Naive thymus-derived CD8-positive, alpha-beta T cell (primary cell): ENCODE measurements at regions of chr12 and their contacts with region 1.

Region 1: GRCh38 chr12:12611512-12612306 is at the start of gene CREBL2:
- DNase-seq: peak; percentile 74 to 93 (median 88)
- ATAC-seq: peak; percentile 89
- H3K4me3 Mint-ChIP-seq: peak within 1 kb of the TSS; percentile 87 to 99 (median 92)
- H3K27ac Mint-ChIP-seq: peak within 1 kb of the TSS; percentile 89 to 100 (median 99)
- H3K4me1 Mint-ChIP-seq: peaks cover 19 to 66% (median 54%) of the 10 kb centered on the region in 4 donors
- H3K27me3 Mint-ChIP-seq: no peaks in the 10 kb centered on the region
- polyA plus RNA-seq, gene CREBL2: 36.5 to 46.8 (median 44.7) TPM

Region 2: DNA sequence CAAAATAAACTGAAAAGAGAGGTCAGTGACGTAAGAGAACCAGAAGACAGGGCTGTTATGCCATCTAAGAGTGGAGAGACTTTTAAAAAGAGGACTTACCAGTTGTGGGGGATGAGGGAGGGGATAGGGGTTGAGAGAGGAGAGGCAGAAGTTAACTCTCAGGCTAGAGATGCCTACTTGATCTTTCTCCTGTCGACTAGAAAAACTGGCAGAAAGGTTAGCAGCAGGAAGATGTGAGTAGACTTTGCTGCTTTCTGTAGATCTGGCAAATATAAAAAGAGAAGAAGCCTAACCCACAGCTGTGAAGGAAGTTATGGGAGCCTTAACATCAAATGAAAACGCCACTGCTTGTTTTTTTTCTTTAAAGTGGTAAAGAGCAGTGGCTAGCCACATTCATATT is 10.7 kb after region 1 on chr12:
- POLR2A ChIA-PET with region 1: interaction called, 25 read pairs
- DNase-seq: peak in 7 of 10 donors; percentile 18 to 80 (median 52)
- ATAC-seq: peak; percentile 89 to 92
- H3K4me3 Mint-ChIP-seq: peak overlapping the region; percentile 48 to 74 (median 62)
- H3K27ac Mint-ChIP-seq: peak overlapping the region; percentile 83 to 94 (median 88)
- H3K4me1 Mint-ChIP-seq: peaks cover 47 to 89% (median 80%) of the 10 kb centered on the region in 4 donors
- H3K27me3 Mint-ChIP-seq: no peaks in the 10 kb centered on the region

Region 3: DNA sequence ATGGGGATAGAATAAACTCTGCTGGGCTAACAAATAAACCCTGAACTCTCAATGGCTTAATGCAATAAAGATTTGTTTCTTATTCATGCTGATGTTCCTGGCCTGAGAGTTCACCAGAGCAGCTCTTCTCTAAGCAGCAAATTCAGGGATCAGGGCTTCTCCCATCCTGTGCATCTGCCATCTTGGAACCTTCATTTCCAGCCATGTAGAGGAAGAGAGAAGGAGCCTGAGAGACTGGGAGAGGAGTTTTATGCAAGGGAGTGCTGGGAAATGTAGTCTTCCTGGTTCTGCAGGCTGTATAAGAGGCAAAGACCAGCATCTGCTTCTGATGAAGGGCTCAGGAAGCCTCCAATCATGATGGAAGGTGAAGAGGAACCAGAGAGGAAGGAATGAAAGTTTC is 153.1 kb after region 1 on chr12:
- POLR2A ChIA-PET with region 1: no interaction called
- DNase-seq: no peak
- ATAC-seq: no peak
- H3K4me3 Mint-ChIP-seq: no peak overlapping the region
- H3K27ac Mint-ChIP-seq: no peak overlapping the region
- H3K4me1 Mint-ChIP-seq: no peaks in the 10 kb centered on the region
- H3K27me3 Mint-ChIP-seq: no peaks in the 10 kb centered on the region